ENCODE measurements at regions of chr2 and their contacts with region 1.

Region 1: DNA sequence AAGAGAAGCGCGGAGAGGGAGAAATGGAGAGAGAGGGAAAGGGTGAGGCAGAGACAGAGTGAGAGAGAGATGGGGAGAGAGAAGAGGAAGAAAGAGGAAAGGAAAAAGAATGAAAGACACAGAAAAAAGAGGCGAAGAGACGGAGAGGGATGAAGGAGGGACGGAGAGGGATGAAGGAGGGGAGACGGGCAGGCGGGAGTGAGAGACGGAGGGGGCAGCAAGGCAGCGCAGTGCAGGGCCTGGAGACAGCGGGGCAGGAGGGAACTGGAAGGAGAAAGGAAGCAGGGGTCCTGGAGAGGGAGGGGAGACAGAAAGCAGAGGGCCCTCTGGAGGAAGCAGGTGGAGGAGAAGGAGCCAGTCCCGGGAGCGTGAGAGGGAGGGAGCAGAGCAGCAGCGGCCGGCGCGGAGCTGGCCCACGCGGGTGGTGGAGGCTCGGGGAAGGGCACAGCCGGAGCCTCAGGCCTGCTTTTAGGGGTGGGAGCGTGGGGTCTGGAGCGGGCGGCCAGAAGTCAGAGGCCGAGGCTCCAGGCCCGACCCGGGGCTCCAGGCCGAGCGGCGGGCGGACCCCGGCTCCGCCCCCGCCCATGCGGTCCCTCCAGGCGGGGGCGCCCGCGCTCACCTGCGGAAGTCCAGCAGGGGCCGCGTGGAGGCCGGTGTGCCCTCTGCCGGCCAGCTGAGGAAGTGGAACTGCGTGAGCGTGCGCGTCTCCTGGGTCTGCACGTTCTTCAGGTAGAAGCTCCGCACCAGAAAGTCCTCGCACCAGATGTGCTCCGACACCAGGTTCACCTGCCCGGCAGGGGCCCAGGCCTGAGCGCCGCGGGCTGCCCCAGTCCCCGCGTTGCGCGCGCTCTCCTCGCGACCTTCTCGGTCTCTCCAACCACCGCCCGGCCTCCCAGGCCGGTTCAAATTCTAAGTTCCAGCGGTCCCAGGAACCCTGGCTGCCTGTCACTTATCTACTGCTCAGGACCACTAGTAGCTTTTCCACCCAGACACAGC is 14.5 kb downstream of the PTPRN start:
- DNase-seq: peak; percentile 90
- H3K4me3 Mint-ChIP-seq: peak overlapping the region; percentile 47
- H3K27ac Mint-ChIP-seq: no peak overlapping the region
- H3K4me1 Mint-ChIP-seq: peaks cover 36% of the 10 kb centered on the region
- H3K27me3 Mint-ChIP-seq: peaks cover 81% of the 10 kb centered on the region

Region 2: DNA sequence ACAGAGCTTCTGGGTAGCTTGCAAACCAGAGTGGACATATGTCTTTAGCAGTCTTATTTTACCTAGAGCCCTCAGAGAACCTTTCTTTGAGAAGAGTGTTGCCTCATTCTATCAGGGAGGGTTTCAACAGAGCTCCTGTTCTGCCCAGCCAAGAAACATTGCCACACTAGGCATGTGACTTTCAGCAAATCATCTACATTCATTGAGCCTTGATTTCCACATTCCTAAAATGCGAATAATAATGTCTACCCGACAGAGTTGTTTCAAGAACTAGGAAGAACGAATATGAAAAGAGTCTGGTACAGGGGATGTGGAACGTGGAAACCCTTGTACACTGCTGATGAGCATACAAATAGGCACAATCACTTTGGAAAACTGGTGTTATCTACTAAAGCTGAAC is 455.2 kb before region 1 on chr2:
- CTCF ChIA-PET with region 1: no interaction called
- DNase-seq: no peak
- H3K4me3 Mint-ChIP-seq: no peak overlapping the region
- H3K27ac Mint-ChIP-seq: no peak overlapping the region
- H3K4me1 Mint-ChIP-seq: no peaks in the 10 kb centered on the region
- H3K27me3 Mint-ChIP-seq: peaks cover 41% of the 10 kb centered on the region

Region 3: GRCh38 chr2:219057709-219058540 is 236.7 kb before region 1 on chr2:
- CTCF ChIA-PET with region 1: interaction called, 14 read pairs
- DNase-seq: peak; percentile 81
- H3K4me3 Mint-ChIP-seq: no peak overlapping the region
- H3K27ac Mint-ChIP-seq: peak overlapping the region; percentile 24
- H3K4me1 Mint-ChIP-seq: peaks cover 22% of the 10 kb centered on the region
- H3K27me3 Mint-ChIP-seq: peaks cover 98% of the 10 kb centered on the region

Region 4: DNA sequence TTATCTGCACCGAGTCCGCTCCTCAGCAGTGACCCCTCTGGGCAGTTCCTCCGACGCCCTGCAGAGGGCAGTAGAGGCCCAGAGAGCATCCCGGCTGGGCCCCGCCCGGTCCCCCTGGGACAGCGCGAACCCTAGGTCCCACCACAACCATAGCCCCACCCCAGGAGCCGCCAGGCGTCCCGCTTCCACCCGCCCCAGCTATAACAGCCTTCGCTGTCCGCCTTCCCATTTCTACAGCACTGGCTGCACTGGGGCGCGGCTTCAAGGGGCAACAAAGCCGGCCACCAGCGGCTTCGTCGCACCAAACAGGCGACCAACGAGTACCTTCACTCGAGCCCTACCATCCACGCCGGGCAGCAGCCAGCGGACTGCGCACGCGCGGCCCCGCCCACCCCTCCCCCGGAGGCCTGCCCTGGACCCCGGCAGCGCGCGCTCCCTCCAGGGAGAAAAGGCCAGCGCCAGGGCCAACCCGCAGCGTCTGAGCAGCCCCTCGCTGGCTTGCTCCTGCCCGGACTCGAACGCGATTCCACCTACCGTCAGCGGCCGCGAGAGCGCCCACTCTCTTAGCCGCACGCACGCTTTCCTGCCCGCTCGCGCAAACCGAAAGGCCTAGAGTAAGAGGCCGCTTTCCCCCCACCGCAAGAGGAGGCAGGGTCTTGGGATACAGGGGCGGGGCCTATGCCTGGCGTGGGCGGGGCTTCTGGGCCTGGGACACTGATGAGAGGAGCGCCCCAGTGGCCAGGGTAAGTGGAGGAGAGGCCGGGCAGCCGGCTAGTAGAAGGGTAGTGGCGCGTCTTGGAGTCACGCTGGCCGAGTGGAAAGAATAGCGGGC is 134.3 kb before region 1 on chr2 and contains the start of gene NHEJ1:
- CTCF ChIA-PET with region 1: interaction called, 70 read pairs
- DNase-seq: peak; percentile 95
- H3K4me3 Mint-ChIP-seq: peak within 1 kb of the TSS; percentile 90
- H3K27ac Mint-ChIP-seq: peak within 1 kb of the TSS; percentile 97
- H3K4me1 Mint-ChIP-seq: peaks cover 27% of the 10 kb centered on the region
- H3K27me3 Mint-ChIP-seq: no peaks in the 10 kb centered on the region

Region 5: GRCh38 chr2:219176818-219177551 is 117.7 kb before region 1 on chr2 and contains the start of gene CNPPD1:
- CTCF ChIA-PET with region 1: interaction called, 33 read pairs
- DNase-seq: peak; percentile 92
- H3K4me3 Mint-ChIP-seq: peak within 1 kb of the TSS; percentile 81
- H3K27ac Mint-ChIP-seq: peak within 1 kb of the TSS; percentile 100
- H3K4me1 Mint-ChIP-seq: peaks cover 60% of the 10 kb centered on the region
- H3K27me3 Mint-ChIP-seq: no peaks in the 10 kb centered on the region

Region 6: DNA sequence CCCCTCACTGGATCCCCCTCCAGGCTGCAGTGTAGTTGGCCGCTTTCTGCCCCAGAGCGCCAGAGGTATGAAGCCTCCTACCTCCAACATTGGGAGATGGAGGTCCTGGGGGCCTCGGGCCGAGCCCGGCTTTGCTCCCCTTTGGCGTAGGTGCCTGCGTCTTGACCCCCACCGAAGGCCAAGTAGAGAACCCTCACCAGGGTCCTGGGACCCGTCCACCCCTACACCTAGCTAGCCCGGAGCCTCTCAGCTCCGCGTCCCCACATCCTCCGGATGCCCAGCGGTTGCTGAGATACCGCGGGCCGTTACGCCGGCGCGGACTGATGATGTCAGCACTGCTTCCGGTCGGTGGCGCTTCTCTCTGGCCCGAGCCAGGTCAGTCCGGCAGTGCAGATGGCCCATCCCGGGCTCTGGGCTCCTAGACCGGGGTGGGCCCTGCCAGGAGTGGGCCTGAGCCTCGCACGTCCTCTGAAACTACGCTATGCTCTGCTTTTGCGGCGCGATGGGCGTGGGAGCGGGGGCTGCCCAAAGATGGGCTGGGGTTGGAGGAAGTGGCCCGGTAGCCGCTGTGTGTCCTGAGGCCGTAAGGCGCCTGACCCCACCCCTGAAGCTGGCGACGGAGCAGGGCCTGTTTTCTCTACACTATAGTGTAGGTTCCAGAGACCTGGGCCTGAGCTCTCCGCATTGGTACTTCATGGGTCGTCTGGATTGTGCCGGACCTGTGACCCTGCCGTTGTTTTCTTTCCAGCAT is 49.3 kb before region 1 on chr2 and contains the starts of genes GLB1L and STK16:
- CTCF ChIA-PET with region 1: interaction called, 29 read pairs
- DNase-seq: peak; percentile 92
- H3K4me3 Mint-ChIP-seq: peak within 1 kb of the TSS; percentile 92
- H3K27ac Mint-ChIP-seq: peak within 1 kb of the TSS; percentile 95
- H3K4me1 Mint-ChIP-seq: peaks cover 74% of the 10 kb centered on the region
- H3K27me3 Mint-ChIP-seq: no peaks in the 10 kb centered on the region

Region 7: DNA sequence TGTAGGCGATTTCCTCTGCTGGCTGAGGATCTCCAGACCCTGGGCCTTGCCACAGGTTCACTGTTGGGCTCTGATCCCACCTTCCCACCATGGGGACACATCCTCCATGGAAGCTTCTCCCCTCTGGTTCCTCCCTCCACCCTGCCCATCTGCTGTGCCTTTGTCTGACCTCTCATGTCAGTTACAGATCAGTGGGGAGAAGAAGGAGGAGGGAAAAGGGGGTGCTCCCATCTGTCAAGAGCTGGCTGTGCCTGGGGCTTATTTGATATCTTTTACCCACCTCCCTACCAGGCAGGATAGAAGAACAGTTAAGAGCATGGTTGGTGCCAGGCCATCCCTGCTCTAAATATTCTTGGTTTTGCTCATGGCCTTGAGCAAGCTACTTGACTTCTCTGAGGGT is 27.8 kb before region 1 on chr2:
- CTCF ChIA-PET with region 1: interaction called, 12 read pairs
- DNase-seq: no peak
- H3K4me3 Mint-ChIP-seq: no peak overlapping the region
- H3K27ac Mint-ChIP-seq: no peak overlapping the region
- H3K4me1 Mint-ChIP-seq: no peaks in the 10 kb centered on the region
- H3K27me3 Mint-ChIP-seq: peaks cover 47% of the 10 kb centered on the region

Region 8: DNA sequence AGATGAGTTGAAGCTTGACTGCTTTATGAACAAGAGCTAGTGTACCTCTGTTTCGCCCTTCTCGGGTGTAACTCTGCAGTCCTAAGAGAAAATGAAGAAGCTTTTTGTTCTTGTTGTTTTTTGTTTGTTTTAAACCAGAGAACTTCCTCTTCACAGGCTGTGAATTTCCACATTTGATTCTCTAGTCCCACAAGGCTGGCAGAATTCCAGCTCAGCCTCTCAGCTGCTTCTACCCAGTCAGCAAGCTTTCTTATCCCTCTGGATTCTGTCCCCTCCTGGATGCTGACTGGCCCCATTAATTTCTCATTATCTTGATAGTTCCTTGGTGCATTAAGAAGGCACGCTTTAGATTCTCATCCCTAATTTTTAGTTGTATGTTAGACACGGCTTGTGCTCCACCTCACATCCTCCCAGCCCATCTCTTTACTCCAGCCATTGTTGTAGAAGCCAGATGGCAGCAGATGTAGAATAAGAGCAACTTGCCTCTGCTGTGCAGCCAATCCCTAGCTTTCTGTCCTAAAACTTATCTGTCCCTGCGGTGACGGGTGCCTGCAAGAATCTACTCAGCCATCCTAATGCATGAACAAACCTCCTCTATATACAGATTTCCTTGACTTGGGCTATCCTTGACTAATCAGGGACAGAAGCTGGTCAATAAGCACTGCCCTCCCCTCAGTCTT is 50.2 kb after region 1 on chr2:
- CTCF ChIA-PET with region 1: no interaction called
- DNase-seq: no peak
- H3K4me3 Mint-ChIP-seq: no peak overlapping the region
- H3K27ac Mint-ChIP-seq: no peak overlapping the region
- H3K4me1 Mint-ChIP-seq: no peaks in the 10 kb centered on the region
- H3K27me3 Mint-ChIP-seq: peaks cover 30% of the 10 kb centered on the region